T-cell (primary cell): ENCODE measurements at regions of chr7 and their contacts with region 1.

Region 1: DNA sequence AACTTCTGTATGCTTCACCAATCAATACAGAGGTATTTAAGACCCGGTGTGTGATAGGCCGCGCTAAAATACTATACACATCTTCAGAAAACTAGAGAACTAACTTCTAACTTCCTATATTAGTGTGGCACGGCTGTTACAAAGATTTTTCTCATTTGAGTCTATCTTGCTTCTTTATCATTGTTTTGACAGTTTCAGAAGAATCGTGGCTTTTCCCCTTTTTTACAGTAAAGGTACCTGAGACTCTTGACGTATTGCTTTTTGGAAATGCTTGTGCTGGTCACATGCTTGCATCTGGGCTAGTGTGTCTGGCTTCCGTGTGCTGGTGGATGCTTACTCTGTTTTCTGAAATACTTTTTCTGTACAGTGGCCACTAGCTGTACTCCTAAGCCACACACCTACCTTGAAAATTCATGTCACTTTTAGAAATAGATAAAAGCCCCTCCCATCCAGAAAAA is 12.7 kb downstream of the IKZF1 start:
- DNase-seq: peak in 30 of 35 experiments; percentile 44 to 90 (median 66)
- ATAC-seq: peak; percentile 67 to 79 (median 69)
- H3K4me3 ChIP-seq: peak overlapping the region in 1 of 2 donors; percentile 35
- H3K4me3 Mint-ChIP-seq: peak overlapping the region; percentile 81 to 98 (median 95)
- H3K27ac ChIP-seq: peak overlapping the region; percentile 87
- H3K27ac Mint-ChIP-seq: peak overlapping the region in 1 of 2 donors; percentile 100
- H3K4me1 ChIP-seq: peaks cover 67 to 84% of the 10 kb centered on the region in 2 experiments
- H3K4me1 Mint-ChIP-seq: peaks cover 97% of the 10 kb centered on the region in 3 donors
- H3K27me3 ChIP-seq: no peaks in the 10 kb centered on the region
- H3K27me3 Mint-ChIP-seq: no peaks in the 10 kb centered on the region

Region 2: DNA sequence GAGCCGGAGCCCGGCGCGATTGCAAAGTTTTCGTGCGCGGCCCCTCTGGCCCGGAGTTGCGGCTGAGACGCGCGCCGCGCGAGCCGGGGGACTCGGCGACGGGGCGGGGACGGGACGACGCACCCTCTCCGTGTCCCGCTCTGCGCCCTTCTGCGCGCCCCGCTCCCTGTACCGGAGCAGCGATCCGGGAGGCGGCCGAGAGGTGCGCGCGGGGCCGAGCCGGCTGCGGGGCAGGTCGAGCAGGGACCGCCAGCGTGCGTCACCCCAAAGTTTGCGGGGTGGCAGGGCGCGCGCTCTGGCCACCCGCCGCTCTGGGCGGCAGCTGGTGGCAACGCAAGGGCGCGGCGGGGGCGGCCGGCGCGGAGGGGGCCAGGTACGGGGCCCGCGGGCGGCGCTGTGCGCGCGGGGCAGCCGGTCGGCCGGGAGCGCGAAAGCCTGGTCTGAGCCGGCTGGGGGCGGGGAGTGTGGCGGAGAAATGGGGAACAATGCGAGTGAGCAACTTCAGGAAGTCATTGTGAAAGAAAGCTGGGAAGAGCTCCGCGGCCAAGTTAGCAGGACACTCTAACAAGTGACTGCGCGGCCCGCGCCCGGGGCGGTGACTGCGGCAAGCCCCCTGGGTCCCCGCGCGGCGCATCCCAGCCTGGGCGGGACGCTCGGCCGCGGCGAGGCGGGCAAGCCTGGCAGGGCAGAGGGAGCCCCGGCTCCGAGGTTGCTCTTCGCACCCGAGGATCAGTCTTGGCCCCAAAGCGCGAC is 12.9 kb before region 1 on chr7 and contains the start of gene IKZF1:
- CTCF ChIA-PET with region 1: interaction called, 3 to 15 read pairs
- POLR2A ChIA-PET with region 1: interaction called in 1 of 2 experiments, 23 read pairs
- DNase-seq: peak in 30 of 35 experiments; percentile 35 to 72 (median 50)
- ATAC-seq: peak; percentile 43 to 57 (median 52)
- H3K4me3 ChIP-seq: peak within 1 kb of the TSS; percentile 68 to 74
- H3K4me3 Mint-ChIP-seq: peak within 1 kb of the TSS; percentile 95 to 99 (median 98)
- H3K27ac ChIP-seq: peak within 1 kb of the TSS; percentile 87
- H3K27ac Mint-ChIP-seq: peak within 1 kb of the TSS; percentile 95 to 100
- H3K4me1 ChIP-seq: peaks cover 32 to 39% of the 10 kb centered on the region in 2 experiments
- H3K4me1 Mint-ChIP-seq: peaks cover 55 to 69% (median 57%) of the 10 kb centered on the region in 3 donors
- H3K27me3 ChIP-seq: no peaks in the 10 kb centered on the region
- H3K27me3 Mint-ChIP-seq: no peaks in the 10 kb centered on the region
- total RNA-seq, gene IKZF1: 429 to 525 (median 494) TPM

Region 3: GRCh38 chr7:50342616-50343114 is 25.4 kb after region 1 on chr7:
- CTCF ChIA-PET with region 1: interaction called, 6 to 16 read pairs
- POLR2A ChIA-PET with region 1: interaction called, 9 to 14 read pairs
- DNase-seq: peak in 29 of 35 experiments; percentile 39 to 84 (median 63)
- ATAC-seq: peak; percentile 31 to 62 (median 38)
- H3K4me3 ChIP-seq: peak overlapping the region in 1 of 2 donors; percentile 12
- H3K4me3 Mint-ChIP-seq: peak overlapping the region in 2 of 3 donors; percentile 62 to 67
- H3K27ac ChIP-seq: peak overlapping the region; percentile 88
- H3K27ac Mint-ChIP-seq: no peak overlapping the region
- H3K4me1 ChIP-seq: peaks cover 85 to 88% of the 10 kb centered on the region in 2 experiments
- H3K4me1 Mint-ChIP-seq: peaks cover 27 to 92% (median 57%) of the 10 kb centered on the region in 3 donors
- H3K27me3 ChIP-seq: no peaks in the 10 kb centered on the region
- H3K27me3 Mint-ChIP-seq: no peaks in the 10 kb centered on the region

Region 4: DNA sequence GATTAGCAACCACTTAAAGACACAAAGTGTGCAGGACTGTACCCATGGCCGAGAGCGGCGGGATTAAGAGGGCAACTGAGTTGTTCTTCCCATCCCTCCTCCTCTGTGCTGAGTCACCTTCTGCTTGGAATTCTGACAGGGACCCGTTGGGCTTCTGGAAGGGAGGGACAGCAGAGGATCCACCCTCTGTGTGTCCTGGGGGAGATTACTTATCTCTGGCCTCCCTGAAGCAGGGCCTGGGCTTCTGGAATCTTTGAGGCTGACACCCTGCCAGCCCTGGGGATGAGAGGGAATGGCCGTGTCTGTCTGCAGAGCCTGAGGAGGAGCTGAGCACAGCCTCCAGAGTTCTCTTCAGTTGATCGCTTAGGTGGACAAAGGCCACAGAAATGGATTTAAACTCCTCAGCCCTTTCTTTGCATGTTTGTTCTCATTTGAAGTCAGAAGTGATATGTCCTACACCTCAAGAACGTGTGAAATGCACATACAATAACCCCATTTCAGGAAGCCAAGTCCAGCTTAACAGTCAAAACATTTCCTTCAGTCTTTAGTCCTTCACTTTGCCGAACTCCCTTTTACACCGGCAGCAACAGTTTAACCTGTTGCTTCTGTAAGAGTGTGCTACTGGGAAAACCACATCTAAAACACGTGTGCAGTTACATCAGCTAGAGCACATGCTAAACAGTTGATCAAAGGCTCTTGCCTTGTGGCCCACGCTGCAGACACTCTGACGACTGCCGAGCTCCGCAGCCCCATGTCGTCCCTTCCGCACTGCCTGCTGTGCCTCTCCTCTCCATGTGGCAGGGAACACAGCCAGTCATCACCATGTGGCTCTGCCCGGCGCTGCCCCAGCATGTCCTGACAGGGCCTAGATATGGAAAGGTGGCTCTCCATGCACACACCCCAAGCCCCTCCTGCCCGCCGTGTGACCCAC is 43.0 kb after region 1 on chr7:
- CTCF ChIA-PET with region 1: interaction called in 1 of 2 experiments, 13 read pairs
- POLR2A ChIA-PET with region 1: interaction called, 4 to 7 read pairs
- DNase-seq: peak; percentile 57 to 95 (median 83)
- ATAC-seq: peak; percentile 85 to 92 (median 87)
- H3K4me3 ChIP-seq: peak overlapping the region in 1 of 2 donors; percentile 10
- H3K4me3 Mint-ChIP-seq: peak overlapping the region; percentile 63 to 73 (median 71)
- H3K27ac ChIP-seq: peak overlapping the region; percentile 96
- H3K27ac Mint-ChIP-seq: peak overlapping the region; percentile 99
- H3K4me1 ChIP-seq: peaks cover 92 to 95% of the 10 kb centered on the region in 2 experiments
- H3K4me1 Mint-ChIP-seq: peaks cover 98 to 99% (median 98%) of the 10 kb centered on the region in 3 donors
- H3K27me3 ChIP-seq: no peaks in the 10 kb centered on the region
- H3K27me3 Mint-ChIP-seq: no peaks in the 10 kb centered on the region